GM12878 (cell line): ENCODE measurements at regions of chr12 and their contacts with region 1.

Region 1: GRCh38 chr12:48681738-48682532 is at the start of gene KANSL2:
- DNase-seq: peak; percentile 95
- ATAC-seq: peak; percentile 97
- H3K4me3 ChIP-seq: peak within 1 kb of the TSS; percentile 90
- H3K27ac ChIP-seq: peak within 1 kb of the TSS; percentile 91
- H3K4me1 ChIP-seq: peaks cover 5% of the 10 kb centered on the region
- H3K27me3 ChIP-seq: no peaks in the 10 kb centered on the region
- CTCF ChIP-seq: no peak
- EP300 ChIP-seq: no peak
- POLR2A ChIP-seq: peak; percentile 100
- RAD21 ChIP-seq: no peak
- polyA plus RNA-seq, gene KANSL2: 39.0 to 54.8 TPM

Region 2: GRCh38 chr12:48671231-48671856 is 10.6 kb before region 1 on chr12:
- CTCF ChIA-PET with region 1: no interaction called
- POLR2A ChIA-PET with region 1: interaction called, 11 read pairs
- RAD21 ChIA-PET with region 1: no interaction called
- SMC1A ChIA-PET with region 1: interaction called, 6 read pairs
- in situ Hi-C with region 1: no loop called
- intact Hi-C with region 1: no loop called
- DNase-seq: no peak
- ATAC-seq: no peak
- H3K4me3 ChIP-seq: no peak overlapping the region
- H3K27ac ChIP-seq: no peak overlapping the region
- H3K4me1 ChIP-seq: no peaks in the 10 kb centered on the region
- H3K27me3 ChIP-seq: no peaks in the 10 kb centered on the region
- CTCF ChIP-seq: no peak
- EP300 ChIP-seq: no peak
- POLR2A ChIP-seq: no peak
- RAD21 ChIP-seq: no peak

Region 3: DNA sequence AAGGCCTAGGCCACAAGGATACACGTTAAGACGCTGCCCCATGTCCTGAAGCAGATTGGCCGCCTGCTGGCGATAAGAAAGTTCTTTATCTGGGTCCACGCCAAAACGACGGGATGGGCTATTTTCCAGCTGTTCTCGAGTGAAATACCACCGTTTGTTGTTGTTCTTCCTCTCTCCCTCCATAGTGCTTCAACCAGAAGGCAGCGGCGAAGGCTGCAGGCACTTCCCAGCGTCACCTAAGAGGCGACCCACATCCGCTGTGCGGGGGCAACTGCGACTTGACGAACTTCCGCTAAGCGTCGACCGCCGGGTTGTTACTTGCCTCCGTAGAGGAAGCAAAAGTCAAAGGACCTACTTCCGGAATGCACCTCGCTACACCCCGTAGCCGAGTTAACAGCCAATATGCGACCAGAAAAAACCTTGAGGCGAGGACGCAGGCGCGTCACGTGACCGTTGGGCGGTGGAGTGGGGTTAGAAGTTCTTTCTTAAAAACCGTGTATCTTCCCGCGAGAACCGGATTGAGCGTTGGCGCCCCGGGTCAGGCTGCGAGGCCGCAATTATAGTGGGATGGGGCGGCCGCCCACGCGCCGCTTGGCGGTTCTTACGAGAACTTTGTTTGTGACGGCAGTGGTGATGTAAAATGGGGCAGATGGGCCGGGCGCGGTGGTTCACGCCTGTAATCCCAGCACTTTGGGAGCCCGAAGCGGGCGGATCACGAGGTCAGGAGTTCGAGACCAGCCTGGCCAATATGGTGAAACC is 34.7 kb after region 1 on chr12 and contains the start of gene CCNT1:
- CTCF ChIA-PET with region 1: interaction called, 3 read pairs
- POLR2A ChIA-PET with region 1: interaction called, 3 read pairs
- RAD21 ChIA-PET with region 1: no interaction called
- SMC1A ChIA-PET with region 1: interaction called, 7 read pairs
- in situ Hi-C with region 1: no loop called
- intact Hi-C with region 1: loop called (anchors 2 kb)
- DNase-seq: peak; percentile 100
- ATAC-seq: peak; percentile 95
- H3K4me3 ChIP-seq: peak within 1 kb of the TSS; percentile 94
- H3K27ac ChIP-seq: peak within 1 kb of the TSS; percentile 96
- H3K4me1 ChIP-seq: peaks cover 10% of the 10 kb centered on the region; the same call in 1 of the 2 replicates
- H3K27me3 ChIP-seq: no peaks in the 10 kb centered on the region
- CTCF ChIP-seq: 0 out of 6 replicates have a peak, but pooled peaks of 1 of the 3 experiments have one; percentile 22
- EP300 ChIP-seq: peak in 1 of 2 experiments; percentile 46; a peak in 2 of 4 replicates
- POLR2A ChIP-seq: peak; percentile 87
- RAD21 ChIP-seq: no peak
- polyA plus RNA-seq, gene CCNT1: 6.3 to 6.5 TPM